PC-9 (cell line): ENCODE measurements at regions of chr7 and their contacts with region 1.

Region 1: GRCh38 chr7:139133335-139134139 is 24.0 kb upstream of the ZC3HAV1 start:
- DNase-seq: peak; percentile 76 to 85
- H3K4me3 ChIP-seq: peak overlapping the region; percentile 69
- H3K27ac ChIP-seq: no peak overlapping the region
- H3K4me1 ChIP-seq: peaks cover 10% of the 10 kb centered on the region; the same call in 1 of the 2 replicates
- H3K27me3 ChIP-seq: peaks cover 3% of the 10 kb centered on the region; the same call in 1 of the 2 replicates
- CTCF ChIP-seq: no peak

Region 2: DNA sequence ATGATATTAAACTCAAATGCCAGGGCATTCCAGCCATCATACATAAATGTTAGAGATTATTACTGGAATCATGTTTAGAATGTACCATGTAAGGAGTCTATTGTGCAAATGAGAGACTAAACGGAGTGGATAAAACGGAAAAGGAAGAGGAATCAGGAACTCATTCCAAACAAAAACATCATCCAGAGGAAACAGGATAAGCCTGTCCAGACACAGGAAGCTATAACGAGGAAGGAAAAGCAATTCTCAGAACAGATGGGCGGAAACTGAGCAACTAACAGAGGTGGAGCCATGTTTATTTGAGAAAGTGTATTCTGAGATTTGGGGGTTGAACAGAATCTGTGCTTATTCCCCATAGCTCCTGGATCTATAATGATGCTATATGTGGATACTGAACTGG is 725.7 kb before region 1 on chr7:
- CTCF ChIA-PET with region 1: no interaction called
- POLR2A ChIA-PET with region 1: no interaction called
- intact Hi-C with region 1: no loop called
- DNase-seq: no peak
- H3K4me3 ChIP-seq: no peak overlapping the region
- H3K27ac ChIP-seq: no peak overlapping the region
- H3K4me1 ChIP-seq: no peaks in the 10 kb centered on the region
- H3K27me3 ChIP-seq: no peaks in the 10 kb centered on the region
- CTCF ChIP-seq: no peak

Region 3: GRCh38 chr7:139109188-139109982 is 24.2 kb before region 1 on chr7 and contains the start of gene ZC3HAV1:
- CTCF ChIA-PET with region 1: no interaction called
- POLR2A ChIA-PET with region 1: no interaction called
- intact Hi-C with region 1: loop called (anchors 1 kb)
- DNase-seq: peak; percentile 76 to 88
- H3K4me3 ChIP-seq: peak within 1 kb of the TSS; percentile 93
- H3K27ac ChIP-seq: peak within 1 kb of the TSS; percentile 75
- H3K4me1 ChIP-seq: peaks cover 21% of the 10 kb centered on the region
- H3K27me3 ChIP-seq: no peaks in the 10 kb centered on the region
- CTCF ChIP-seq: no peak
- total RNA-seq, gene ZC3HAV1: 30.8 and 36.7 TPM in 2 replicates